Left cardiac atrium (tissue), 4 donors: ENCODE measurements at regions of chr1 and their contacts with region 1.

Region 1: GRCh38 chr1:3012456-3013291 is 8.6 kb upstream of the ACTRT2 start:
- DNase-seq: peak; percentile 69
- ATAC-seq: peak; percentile 78

Region 2: GRCh38 chr1:2906085-2906484 is 106.6 kb before region 1 on chr1:
- intact Hi-C with region 1: no loop called
- DNase-seq: no peak
- ATAC-seq: no peak

Region 3: DNA sequence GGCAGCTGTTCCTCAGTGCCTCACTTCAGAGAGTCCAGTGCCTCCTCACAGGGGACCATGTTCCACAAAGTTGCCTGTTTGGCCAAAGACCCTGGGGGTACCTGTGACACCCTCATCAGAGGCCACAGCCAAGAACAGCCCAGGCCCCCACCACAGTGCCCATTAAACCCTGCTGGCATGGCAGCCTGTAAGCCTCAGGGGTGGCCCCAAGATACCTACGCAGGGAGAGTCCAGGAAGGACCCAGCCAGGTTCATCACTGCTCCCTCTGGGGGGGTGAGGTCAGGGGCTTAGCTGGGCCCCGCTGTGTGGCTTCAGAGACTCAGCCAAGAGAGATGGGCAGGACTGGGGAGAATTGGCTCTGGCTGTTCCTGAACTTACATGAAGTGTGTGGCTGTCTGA is 37.2 kb after region 1 on chr1:
- intact Hi-C with region 1: no loop called
- DNase-seq: no peak
- ATAC-seq: no peak

Region 4: GRCh38 chr1:3219005-3219790 is 206.5 kb after region 1 on chr1:
- intact Hi-C with region 1: no loop called
- DNase-seq: peak; percentile 71
- ATAC-seq: peak; percentile 69 to 79

Region 5: GRCh38 chr1:3283849-3284248 is 271.2 kb after region 1 on chr1:
- intact Hi-C with region 1: loop called in 1 of 2 experiments (anchors 10 kb)
- DNase-seq: peak; percentile 43
- ATAC-seq: peak; percentile 74 to 78

Region 6: DNA sequence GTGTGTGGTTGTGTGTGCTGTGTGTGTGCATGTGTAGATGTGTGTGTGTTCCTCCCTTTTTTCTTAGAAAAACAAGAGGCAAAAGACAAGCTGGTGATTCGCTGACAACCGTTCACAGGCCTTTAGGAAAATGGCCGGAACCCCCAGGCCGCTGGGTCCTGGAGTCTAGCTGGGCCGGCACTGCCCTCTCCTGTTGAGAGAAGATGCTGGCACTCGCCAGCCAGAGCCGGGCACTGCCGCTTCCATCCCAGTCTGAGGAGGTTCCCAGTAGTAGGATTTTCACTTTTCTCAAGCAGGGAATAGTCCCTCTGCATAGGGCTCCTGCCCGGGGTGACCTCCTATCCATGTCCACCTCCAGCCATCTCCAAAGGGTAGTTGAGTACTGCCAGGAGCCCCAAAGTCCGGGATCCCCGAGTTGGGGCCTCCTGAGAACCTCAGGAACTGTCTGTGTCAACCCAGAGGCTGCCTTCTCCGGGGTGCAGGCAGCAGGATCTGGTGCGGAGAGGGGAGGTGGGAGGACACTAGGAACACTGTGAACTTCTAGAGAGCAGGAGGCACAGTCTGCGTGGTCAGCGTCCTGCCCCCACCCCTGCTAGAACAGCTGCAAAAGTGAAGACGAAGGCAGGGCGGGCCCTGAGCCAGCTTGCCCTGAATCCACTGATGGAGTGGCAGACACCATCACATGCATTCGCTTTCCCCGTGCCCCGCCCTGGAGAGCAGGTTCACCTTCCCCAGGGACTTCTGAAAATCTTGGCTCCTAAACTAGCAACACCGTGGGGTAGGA is 397.7 kb after region 1 on chr1:
- intact Hi-C with region 1: loop called (anchors 1 to 5 kb)
- DNase-seq: peak; percentile 80
- ATAC-seq: peak; percentile 88 to 94